HCT116 (cell line): ENCODE measurements at regions of chr14 and their contacts with region 1.

Region 1: GRCh38 chr14:68788996-68789820 is 3.7 kb downstream of the ZFP36L1 start:
- DNase-seq: no peak
- ATAC-seq: peak; percentile 14
- H3K4me3 ChIP-seq: peak overlapping the region; percentile 83 to 89
- H3K27ac ChIP-seq: peak overlapping the region; percentile 99
- H3K4me1 ChIP-seq: peaks cover 58 to 83% of the 10 kb centered on the region in 2 experiments
- H3K27me3 ChIP-seq: no peaks in the 10 kb centered on the region
- CTCF ChIP-seq: peak in 2 of 3 experiments; percentile 67 to 74; a peak in 4 of 6 replicates
- POLR2A ChIP-seq: no peak
- RAD21 ChIP-seq: no peak

Region 2: GRCh38 chr14:68065322-68065721 is 723.9 kb before region 1 on chr14:
- CTCF ChIA-PET with region 1: no interaction called
- POLR2A ChIA-PET with region 1: no interaction called
- RAD21 ChIA-PET with region 1: no interaction called
- intact Hi-C with region 1: no loop called
- DNase-seq: no peak
- ATAC-seq: no peak
- H3K4me3 ChIP-seq: no peak overlapping the region
- H3K27ac ChIP-seq: no peak overlapping the region
- H3K4me1 ChIP-seq: 0 out of 4 replicates have a peak, but pooled peaks cover 0 to 2% of the 10 kb centered on the region in 2 experiments
- H3K27me3 ChIP-seq: no peaks in the 10 kb centered on the region
- CTCF ChIP-seq: no peak
- POLR2A ChIP-seq: no peak
- RAD21 ChIP-seq: no peak

Region 3: DNA sequence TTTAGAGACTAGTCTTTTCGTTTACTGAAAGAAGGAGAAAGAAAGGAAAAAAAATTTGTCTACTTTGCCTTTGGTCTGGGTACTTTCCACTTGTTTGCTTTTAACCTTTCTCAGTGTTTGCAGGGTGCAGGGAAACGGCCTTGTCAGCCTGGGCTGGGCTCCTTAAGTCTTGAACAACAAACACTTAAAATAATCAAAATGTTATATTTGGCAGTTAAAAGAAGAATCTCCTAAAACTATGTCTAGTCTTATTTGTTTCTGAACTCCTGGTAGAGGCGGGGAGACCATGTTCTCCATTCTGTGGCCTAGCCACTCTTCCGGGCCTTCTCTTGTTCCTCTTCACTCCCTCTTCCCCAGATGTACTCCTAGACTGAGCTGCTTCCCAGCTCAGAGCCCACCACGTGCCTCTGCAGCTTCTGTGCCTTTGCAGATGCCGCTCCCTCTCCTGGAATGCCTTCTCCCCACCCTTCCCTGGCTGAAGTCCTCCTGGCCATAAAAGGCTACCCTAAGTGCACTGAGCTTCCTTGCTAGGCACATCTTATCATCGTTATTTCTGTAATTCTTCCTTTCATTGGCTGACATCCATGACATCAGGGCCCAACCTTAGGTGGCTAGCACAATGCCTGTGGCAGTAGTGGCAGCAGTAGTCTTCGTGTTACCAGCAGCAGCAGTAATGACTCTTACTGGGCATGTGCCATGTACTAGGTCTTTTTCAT is 429.2 kb before region 1 on chr14:
- CTCF ChIA-PET with region 1: no interaction called
- POLR2A ChIA-PET with region 1: no interaction called
- RAD21 ChIA-PET with region 1: no interaction called
- intact Hi-C with region 1: loop called (anchors 10 kb)
- DNase-seq: peak; percentile 37
- ATAC-seq: peak; percentile 55
- H3K4me3 ChIP-seq: no peak overlapping the region
- H3K27ac ChIP-seq: peak overlapping the region; percentile 50
- H3K4me1 ChIP-seq: peaks cover 52% of the 10 kb centered on the region in 2 experiments
- H3K27me3 ChIP-seq: no peaks in the 10 kb centered on the region
- CTCF ChIP-seq: no peak
- POLR2A ChIP-seq: peak; percentile 23
- RAD21 ChIP-seq: no peak

Region 4: DNA sequence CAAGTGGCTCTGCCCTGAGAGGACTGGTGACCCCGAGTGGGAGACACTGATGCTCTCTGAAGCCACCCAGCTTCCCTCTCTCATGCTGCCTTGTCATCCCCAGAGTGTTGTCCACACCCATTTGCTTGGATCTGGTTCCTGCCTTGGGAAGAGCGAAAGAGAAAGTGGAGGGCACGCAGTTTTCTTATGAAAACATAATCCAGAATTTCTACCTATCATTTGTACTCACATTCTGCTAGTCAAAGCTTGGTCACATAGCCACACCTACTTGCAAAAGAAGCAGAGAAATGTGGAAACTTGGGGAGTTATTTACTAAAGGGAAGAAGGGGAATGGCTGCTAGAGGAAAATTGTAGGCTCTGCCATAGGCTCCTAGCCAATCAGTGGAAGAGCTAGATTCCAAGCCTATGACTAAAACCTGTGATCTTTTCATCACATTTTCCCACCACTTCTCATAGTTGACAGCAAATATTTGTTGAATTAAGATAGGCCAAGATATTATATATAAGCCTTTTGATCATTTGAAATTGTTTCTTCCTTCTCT is 322.6 kb before region 1 on chr14:
- CTCF ChIA-PET with region 1: no interaction called
- POLR2A ChIA-PET with region 1: interaction called, 3 read pairs
- RAD21 ChIA-PET with region 1: no interaction called
- intact Hi-C with region 1: loop called (anchors 2 kb)
- DNase-seq: peak; percentile 78
- ATAC-seq: peak; percentile 55
- H3K4me3 ChIP-seq: peak overlapping the region; percentile 1 to 41
- H3K27ac ChIP-seq: peak overlapping the region; percentile 92
- H3K4me1 ChIP-seq: peaks cover 73 to 84% of the 10 kb centered on the region in 2 experiments
- H3K27me3 ChIP-seq: no peaks in the 10 kb centered on the region
- CTCF ChIP-seq: no peak
- POLR2A ChIP-seq: no peak
- RAD21 ChIP-seq: no peak

Region 5: GRCh38 chr14:68685419-68686204 is 103.6 kb before region 1 on chr14:
- CTCF ChIA-PET with region 1: no interaction called
- POLR2A ChIA-PET with region 1: interaction called, 7 read pairs
- RAD21 ChIA-PET with region 1: no interaction called
- intact Hi-C with region 1: loop called (anchors 2 kb)
- DNase-seq: peak; percentile 86
- ATAC-seq: peak; percentile 79
- H3K4me3 ChIP-seq: peak overlapping the region in 1 of 2 experiments; percentile 2; a peak in 1 of 4 replicates
- H3K27ac ChIP-seq: peak overlapping the region; percentile 66
- H3K4me1 ChIP-seq: peaks cover 55 to 85% of the 10 kb centered on the region in 2 experiments
- H3K27me3 ChIP-seq: no peaks in the 10 kb centered on the region
- CTCF ChIP-seq: no peak
- POLR2A ChIP-seq: no peak
- RAD21 ChIP-seq: peak; percentile 13; the same call in 1 of the 2 replicates

Region 6: GRCh38 chr14:68924186-68925158 is 135.3 kb after region 1 on chr14:
- CTCF ChIA-PET with region 1: no interaction called
- POLR2A ChIA-PET with region 1: no interaction called
- RAD21 ChIA-PET with region 1: no interaction called
- intact Hi-C with region 1: no loop called
- DNase-seq: no peak
- ATAC-seq: no peak
- H3K4me3 ChIP-seq: no peak overlapping the region
- H3K27ac ChIP-seq: no peak overlapping the region
- H3K4me1 ChIP-seq: peaks cover 0 to 5% of the 10 kb centered on the region in 2 experiments; a peak in 1 of 4 replicates
- H3K27me3 ChIP-seq: no peaks in the 10 kb centered on the region
- CTCF ChIP-seq: no peak
- POLR2A ChIP-seq: no peak
- RAD21 ChIP-seq: no peak